Psoas muscle (tissue), 8 donors: ENCODE measurements at regions of chr6 and their contacts with region 1.

Region 1: GRCh38 chr6:1381481-1382330 is 7.7 kb upstream of the FOXF2 start:
- DNase-seq: peak in 1 of 2 donors; percentile 53
- ATAC-seq: peak; percentile 76 to 89 (median 86)
- H3K4me3 ChIP-seq: peak overlapping the region; percentile 59
- H3K27ac ChIP-seq: no peak overlapping the region
- H3K4me1 ChIP-seq: peaks cover 24% of the 10 kb centered on the region
- H3K27me3 ChIP-seq: peaks cover 6 to 100% (median 53%) of the 10 kb centered on the region in 3 donors
- CTCF ChIP-seq: peak; percentile 94

Region 2: DNA sequence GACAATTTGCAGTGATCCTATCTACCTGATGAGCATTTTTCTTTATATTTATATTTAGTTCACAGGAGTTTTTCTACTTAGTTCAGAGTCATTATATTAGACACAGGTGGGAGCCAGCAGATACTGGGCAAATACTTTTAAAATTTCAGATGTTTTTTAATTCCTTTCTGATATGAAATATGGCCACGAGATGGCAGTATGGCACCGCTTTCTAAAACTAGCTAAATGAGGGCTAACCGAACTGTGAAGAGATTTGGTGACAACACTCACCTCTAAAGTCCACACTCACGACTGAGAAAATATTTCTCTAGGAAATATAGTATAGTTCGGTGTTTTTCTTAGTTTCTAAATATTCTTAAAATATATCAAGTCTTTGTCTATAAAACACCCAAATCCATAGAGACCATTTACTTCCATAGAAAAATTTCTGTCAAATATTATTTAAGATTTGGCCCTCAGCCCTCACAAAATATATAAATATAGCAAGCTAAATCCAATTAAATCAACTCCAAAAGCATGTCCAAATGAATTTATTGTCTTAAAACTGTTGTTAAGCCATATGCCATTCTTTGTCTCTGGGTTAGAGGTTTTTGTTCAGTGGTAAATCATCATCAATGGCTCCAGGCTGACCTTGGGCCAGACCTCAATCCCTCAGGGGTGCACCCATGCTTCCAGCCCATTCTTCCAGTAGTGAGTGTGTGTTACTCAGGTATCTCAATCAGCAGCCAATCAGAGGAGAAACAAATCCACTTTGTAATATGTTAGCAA is 788.4 kb before region 1 on chr6:
- intact Hi-C with region 1: loop called in 1 of 2 experiments (anchors 5 kb)
- DNase-seq: no peak
- ATAC-seq: peak; percentile 64 to 82 (median 66)
- H3K4me3 ChIP-seq: no peak overlapping the region
- H3K27ac ChIP-seq: no peak overlapping the region
- H3K4me1 ChIP-seq: no peaks in the 10 kb centered on the region
- H3K27me3 ChIP-seq: no peaks in the 10 kb centered on the region
- CTCF ChIP-seq: peak; percentile 80

Region 3: GRCh38 chr6:722077-722524 is 659.6 kb before region 1 on chr6:
- intact Hi-C with region 1: loop called in 1 of 2 experiments (anchors 10 kb)
- DNase-seq: peak; percentile 65 to 81
- ATAC-seq: peak in 3 of 4 donors; percentile 54 to 82 (median 55)
- H3K4me3 ChIP-seq: no peak overlapping the region
- H3K27ac ChIP-seq: no peak overlapping the region
- H3K4me1 ChIP-seq: no peaks in the 10 kb centered on the region
- H3K27me3 ChIP-seq: no peaks in the 10 kb centered on the region
- CTCF ChIP-seq: peak; percentile 90

Region 4: DNA sequence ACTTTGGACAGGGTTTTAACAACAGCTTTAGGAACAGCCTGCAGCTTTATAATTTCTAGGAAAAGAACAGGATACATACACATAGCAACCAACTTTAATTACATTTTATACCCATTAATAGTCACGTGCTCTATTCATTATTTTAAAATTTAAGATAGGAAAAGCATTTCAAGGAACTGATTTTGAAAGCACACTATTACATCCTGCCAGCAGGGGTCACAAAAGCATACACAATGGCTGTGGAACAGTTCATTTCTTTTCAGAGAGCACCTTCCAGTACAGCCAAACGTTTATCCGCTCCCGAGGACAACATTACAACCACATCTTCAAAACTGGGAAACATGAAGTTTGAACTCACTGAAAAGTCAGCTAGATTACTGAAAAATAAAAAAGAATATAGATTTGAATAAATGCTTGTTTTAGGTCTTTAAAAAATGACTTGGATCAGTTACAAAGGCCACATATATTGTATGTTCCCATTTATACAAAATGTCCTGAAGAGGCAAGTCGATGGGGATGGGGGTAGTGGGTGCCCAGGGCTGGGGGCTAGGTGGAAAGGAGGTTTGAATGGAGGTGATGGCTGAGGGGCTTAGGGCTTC is 584.1 kb before region 1 on chr6:
- intact Hi-C with region 1: loop called (anchors 5 kb)
- DNase-seq: no peak
- ATAC-seq: peak; percentile 68 to 82 (median 73)
- H3K4me3 ChIP-seq: no peak overlapping the region
- H3K27ac ChIP-seq: no peak overlapping the region
- H3K4me1 ChIP-seq: no peaks in the 10 kb centered on the region
- H3K27me3 ChIP-seq: peaks cover 2 to 12% (median 3%) of the 10 kb centered on the region in 3 donors
- CTCF ChIP-seq: peak; percentile 84

Region 5: DNA sequence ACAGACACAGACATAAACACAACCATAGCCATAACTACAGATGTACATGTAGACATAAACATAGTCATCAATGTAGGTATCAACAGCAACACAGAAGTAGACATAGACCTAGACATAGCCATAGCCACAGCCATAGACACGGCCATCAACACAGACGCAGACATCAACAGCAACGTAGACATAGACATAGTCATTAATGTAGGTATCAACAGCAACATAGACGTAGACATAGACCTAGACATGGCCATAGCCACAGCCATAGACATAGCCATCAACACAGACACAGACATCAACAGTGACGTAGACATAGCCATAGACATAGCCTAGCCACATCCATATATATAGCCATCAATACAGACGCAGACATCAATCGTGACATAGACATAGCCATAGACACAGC is 328.1 kb before region 1 on chr6:
- intact Hi-C with region 1: no loop called
- DNase-seq: no peak
- ATAC-seq: peak in 3 of 4 donors; percentile 21 to 44 (median 26)
- H3K4me3 ChIP-seq: no peak overlapping the region
- H3K27ac ChIP-seq: no peak overlapping the region
- H3K4me1 ChIP-seq: no peaks in the 10 kb centered on the region
- H3K27me3 ChIP-seq: peaks cover 0 to 3% (median 0%) of the 10 kb centered on the region in 3 donors
- CTCF ChIP-seq: no peak

Region 6: GRCh38 chr6:1311400-1312202 is 70.1 kb before region 1 on chr6 and contains the start of gene FOXQ1:
- intact Hi-C with region 1: loop called in 1 of 2 experiments (anchors 5 kb)
- DNase-seq: peak in 1 of 2 donors; percentile 55
- ATAC-seq: peak in 3 of 4 donors; percentile 28 to 57 (median 36)
- H3K4me3 ChIP-seq: peak within 1 kb of the TSS; percentile 63
- H3K27ac ChIP-seq: no peak within 1 kb of the TSS
- H3K4me1 ChIP-seq: peaks cover 4% of the 10 kb centered on the region
- H3K27me3 ChIP-seq: peaks cover 19 to 83% (median 28%) of the 10 kb centered on the region in 3 donors
- CTCF ChIP-seq: no peak
- total RNA-seq, gene FOXQ1: not detected